Breast epithelium (tissue), 4 donors: ENCODE measurements at regions of chr4 and their contacts with region 1.

Region 1: GRCh38 chr4:77493120-77493752 is 112.4 kb upstream of the CXCL13 start:
- DNase-seq: no peak
- H3K4me3 ChIP-seq: no peak overlapping the region
- H3K27ac ChIP-seq: no peak overlapping the region
- H3K4me1 ChIP-seq: no peaks in the 10 kb centered on the region
- H3K27me3 ChIP-seq: no peaks in the 10 kb centered on the region
- CTCF ChIP-seq: no peak
- POLR2A ChIP-seq: no peak

Region 2: GRCh38 chr4:77505958-77506319 is 12.7 kb after region 1 on chr4:
- intact Hi-C with region 1: loop called (anchors 1 kb)
- DNase-seq: no peak
- H3K4me3 ChIP-seq: no peak overlapping the region
- H3K27ac ChIP-seq: no peak overlapping the region
- H3K4me1 ChIP-seq: no peaks in the 10 kb centered on the region
- H3K27me3 ChIP-seq: no peaks in the 10 kb centered on the region
- CTCF ChIP-seq: no peak
- POLR2A ChIP-seq: no peak

Region 3: DNA sequence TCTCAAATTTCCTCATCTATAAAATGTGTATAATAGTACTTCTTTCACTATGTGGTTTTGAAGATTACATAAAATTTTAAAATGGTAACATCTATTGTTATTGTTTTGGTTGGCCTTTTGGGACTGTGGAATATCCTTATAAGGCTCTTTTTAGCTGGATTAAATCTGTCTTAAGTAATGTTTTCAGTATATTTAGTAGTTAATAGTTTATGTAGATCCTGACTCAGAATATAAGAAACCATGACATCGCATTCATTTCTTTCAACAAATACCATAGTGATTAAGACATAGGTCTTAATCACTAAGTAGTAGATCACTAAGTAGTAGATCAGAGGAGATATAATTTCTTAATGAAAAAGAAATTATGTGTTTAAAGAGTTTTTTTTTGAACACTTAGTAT is 417.9 kb after region 1 on chr4:
- intact Hi-C with region 1: no loop called
- DNase-seq: no peak
- H3K4me3 ChIP-seq: no peak overlapping the region
- H3K27ac ChIP-seq: no peak overlapping the region
- H3K4me1 ChIP-seq: no peaks in the 10 kb centered on the region
- H3K27me3 ChIP-seq: no peaks in the 10 kb centered on the region
- CTCF ChIP-seq: no peak
- POLR2A ChIP-seq: no peak